Activated CD4-positive, alpha-beta T cell treated with anti-CD3 and anti-CD28 coated beads for 36 hours (primary cell): ENCODE measurements at regions of chr10 and their contacts with region 1.

Region 1: GRCh38 chr10:97425964-97426775 is at the start of gene PGAM1:
- DNase-seq: peak; percentile 97
- ATAC-seq: peak; percentile 71
- H3K4me3 Mint-ChIP-seq: peak within 1 kb of the TSS; percentile 96
- H3K27ac Mint-ChIP-seq: peak within 1 kb of the TSS; percentile 98
- H3K4me1 Mint-ChIP-seq: peaks cover 52% of the 10 kb centered on the region
- H3K27me3 Mint-ChIP-seq: no peaks in the 10 kb centered on the region
- total RNA-seq, gene PGAM1: 1,151 to 1,499 TPM

Region 2: DNA sequence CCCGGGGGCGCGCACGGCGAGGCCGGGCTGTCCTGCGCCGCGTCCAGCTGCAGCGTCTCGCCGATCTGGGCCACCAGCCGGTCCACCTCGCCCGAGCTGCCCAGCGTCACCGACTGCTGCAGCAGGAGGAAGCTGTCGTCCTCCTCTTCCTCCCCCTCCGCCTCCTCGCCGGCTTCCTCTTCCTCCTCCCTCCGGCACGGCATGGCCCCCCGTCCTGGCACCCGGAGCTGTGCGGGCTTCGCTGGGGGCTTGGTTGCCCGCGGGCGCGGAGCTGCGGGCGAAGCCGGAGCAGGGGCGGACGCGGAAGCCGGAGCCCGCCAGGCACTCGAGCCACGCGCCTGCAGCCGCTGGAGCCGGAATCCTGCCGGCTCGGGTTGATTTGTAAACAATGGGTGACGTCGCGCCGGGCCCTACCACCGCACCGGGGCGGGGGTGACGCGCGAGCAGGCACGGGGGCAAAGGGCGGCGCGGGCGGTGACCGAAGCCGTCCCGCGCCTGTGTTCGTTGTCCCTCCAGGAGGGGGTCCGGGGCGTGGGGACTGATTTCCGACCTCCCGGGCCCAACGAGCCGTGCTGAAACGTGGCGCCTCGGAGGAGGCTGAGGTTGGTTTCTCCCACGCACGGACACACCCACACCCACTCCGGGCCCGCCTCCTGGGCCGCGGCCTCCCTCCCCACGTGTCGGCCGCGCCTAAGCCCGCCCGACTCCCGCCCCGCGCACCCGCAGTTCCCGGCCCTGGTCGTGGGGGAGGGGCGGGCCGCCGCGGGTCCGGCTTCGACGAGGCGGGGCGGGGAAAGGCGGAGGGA is 91.6 kb before region 1 on chr10 and contains the start of gene FRAT2:
- CTCF ChIA-PET with region 1: interaction called, 3 read pairs
- POLR2A ChIA-PET with region 1: interaction called, 4 read pairs
- intact Hi-C with region 1: loop called in 1 of 2 experiments (anchors 2 kb)
- DNase-seq: peak; percentile 91
- ATAC-seq: peak; percentile 85
- H3K4me3 Mint-ChIP-seq: peak within 1 kb of the TSS; percentile 83
- H3K27ac Mint-ChIP-seq: peak within 1 kb of the TSS; percentile 86
- H3K4me1 Mint-ChIP-seq: peaks cover 40% of the 10 kb centered on the region
- H3K27me3 Mint-ChIP-seq: no peaks in the 10 kb centered on the region
- total RNA-seq, gene FRAT2: 3.0 to 4.3 TPM

Region 3: GRCh38 chr10:97407211-97407951 is 18.8 kb before region 1 on chr10:
- CTCF ChIA-PET with region 1: interaction called, 138 read pairs
- POLR2A ChIA-PET with region 1: interaction called, 41 read pairs
- intact Hi-C with region 1: loop called (anchors 1 kb)
- DNase-seq: peak; percentile 81
- ATAC-seq: peak; percentile 97
- H3K4me3 Mint-ChIP-seq: peak overlapping the region; percentile 47
- H3K27ac Mint-ChIP-seq: peak overlapping the region; percentile 56
- H3K4me1 Mint-ChIP-seq: peaks cover 11% of the 10 kb centered on the region
- H3K27me3 Mint-ChIP-seq: no peaks in the 10 kb centered on the region

Region 4: DNA sequence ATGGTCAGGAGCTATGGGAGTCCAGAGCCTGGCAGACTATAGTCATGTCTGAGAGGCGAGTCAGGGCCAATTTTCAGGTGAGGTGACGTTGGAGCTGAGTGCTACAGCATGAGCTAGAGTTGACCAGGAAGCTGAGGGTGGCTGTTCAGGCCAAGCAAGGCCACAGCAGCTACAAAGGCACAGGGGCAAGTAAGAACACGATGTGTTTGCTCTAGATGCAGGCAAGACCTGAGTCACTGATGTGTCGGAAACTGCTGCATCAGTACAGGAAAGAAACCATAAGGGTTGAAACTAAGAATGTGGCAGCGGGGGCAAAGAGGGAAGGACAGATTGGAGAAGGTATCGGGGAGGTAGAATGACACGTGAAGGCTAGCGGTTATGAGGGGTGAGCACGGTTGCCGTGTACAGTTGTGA is 13.3 kb before region 1 on chr10:
- CTCF ChIA-PET with region 1: interaction called, 138 read pairs
- POLR2A ChIA-PET with region 1: interaction called, 41 read pairs
- intact Hi-C with region 1: loop called (anchors 1 kb)
- DNase-seq: peak; percentile 85
- ATAC-seq: peak; percentile 72
- H3K4me3 Mint-ChIP-seq: peak overlapping the region; percentile 37
- H3K27ac Mint-ChIP-seq: peak overlapping the region; percentile 87
- H3K4me1 Mint-ChIP-seq: peaks cover 52% of the 10 kb centered on the region
- H3K27me3 Mint-ChIP-seq: no peaks in the 10 kb centered on the region

Region 5: DNA sequence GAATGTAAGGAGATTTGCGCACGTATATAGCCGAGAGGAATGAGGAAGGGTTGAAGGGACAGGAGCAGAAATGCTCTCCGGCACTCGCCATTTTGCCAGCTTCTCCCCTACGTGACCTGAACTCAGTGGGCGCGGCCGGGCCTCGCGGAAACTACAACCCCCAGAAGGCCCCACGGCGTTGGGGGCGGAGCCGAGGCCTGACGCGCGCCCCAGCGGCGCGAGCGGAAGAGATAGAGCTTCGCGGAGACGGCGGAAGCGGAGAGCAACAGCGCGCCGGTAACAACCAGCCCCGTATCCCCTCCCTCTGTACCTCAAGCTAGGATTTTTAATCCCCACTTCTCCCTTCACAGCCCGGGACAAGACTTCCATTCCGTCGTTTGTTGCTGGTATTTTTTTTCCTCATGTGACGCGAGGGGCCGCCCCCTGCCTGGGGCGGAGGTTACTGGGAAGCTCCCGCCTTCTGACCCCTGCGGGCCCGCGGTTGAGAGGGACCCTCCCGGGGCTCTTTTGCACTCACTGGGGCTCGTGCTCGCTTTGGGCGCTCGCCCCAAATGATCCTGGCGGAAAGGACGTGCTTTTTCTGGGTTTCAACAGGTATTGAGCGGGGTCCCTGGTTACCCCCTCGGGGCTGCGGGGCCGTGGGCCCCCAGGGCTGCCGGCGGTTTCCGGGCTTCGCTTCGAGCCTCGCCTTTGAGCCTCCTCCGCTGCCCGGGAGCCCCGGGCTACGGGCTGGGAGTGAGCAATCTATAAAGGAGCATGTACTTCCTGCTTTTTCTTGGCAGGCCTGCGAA is 708.5 kb after region 1 on chr10 and contains the start of gene R3HCC1L:
- CTCF ChIA-PET with region 1: no interaction called
- POLR2A ChIA-PET with region 1: no interaction called
- intact Hi-C with region 1: loop called in 1 of 2 experiments (anchors 10 kb)
- DNase-seq: peak; percentile 97
- ATAC-seq: peak; percentile 95
- H3K4me3 Mint-ChIP-seq: peak within 1 kb of the TSS; percentile 86
- H3K27ac Mint-ChIP-seq: peak within 1 kb of the TSS; percentile 93
- H3K4me1 Mint-ChIP-seq: peaks cover 44% of the 10 kb centered on the region
- H3K27me3 Mint-ChIP-seq: no peaks in the 10 kb centered on the region
- total RNA-seq, gene R3HCC1L: 13.5 to 16.8 TPM